ENCODE measurements at regions of chr4 and their contacts with region 1.

Region 1: DNA sequence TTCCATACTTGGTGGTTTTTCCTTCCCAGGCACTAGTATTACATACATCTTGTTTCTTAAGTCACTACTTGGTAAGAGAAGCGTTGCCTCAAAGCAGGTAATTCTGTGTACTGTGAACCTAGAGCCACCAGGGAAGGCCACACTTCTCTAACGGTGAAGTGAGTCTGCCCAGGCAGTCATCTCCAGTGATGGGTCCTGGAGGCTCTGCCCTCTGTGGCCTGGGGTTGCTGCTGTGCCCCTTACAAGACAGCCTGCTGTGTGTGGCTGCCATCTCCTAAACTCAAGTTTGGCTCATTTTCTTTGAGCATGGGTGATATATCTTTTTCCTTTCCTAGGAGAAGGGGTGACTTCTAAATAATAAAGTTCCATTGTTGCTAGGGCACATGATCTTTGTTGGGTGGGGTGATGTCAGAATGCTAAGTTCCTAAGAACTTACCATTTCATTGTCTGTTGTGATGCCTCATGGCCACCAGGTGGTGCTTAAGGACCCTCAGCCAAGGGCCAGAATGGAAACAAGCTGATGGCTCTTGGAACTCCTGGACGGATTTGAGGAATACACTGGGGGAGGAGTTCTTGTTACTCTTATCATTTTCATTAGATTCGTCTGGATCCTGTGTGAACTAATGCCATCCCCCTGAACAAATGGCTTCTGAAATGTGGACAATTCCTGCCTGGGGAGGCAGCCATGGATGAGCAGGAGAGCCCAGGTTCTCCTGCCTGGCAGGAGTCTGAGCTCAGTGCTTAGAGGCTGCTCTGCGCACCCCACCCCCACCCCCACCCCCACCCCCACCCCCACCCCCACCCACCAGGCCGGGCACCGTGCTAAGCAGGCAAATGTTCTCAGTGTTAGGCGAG is 41.1 kb upstream of the WDR1 start:
- DNase-seq: peak; percentile 81
- ATAC-seq: peak; percentile 89
- H3K4me3 ChIP-seq: no peak overlapping the region
- H3K27ac ChIP-seq: peak overlapping the region; percentile 60; the same call in 1 of the 2 replicates
- H3K4me1 ChIP-seq: peaks cover 2% of the 10 kb centered on the region
- H3K27me3 ChIP-seq: peaks cover 13% of the 10 kb centered on the region
- CTCF ChIP-seq: peak; percentile 87
- POLR2A ChIP-seq: no peak
- RAD21 ChIP-seq: peak; percentile 81

Region 2: GRCh38 chr4:10403633-10404445 is 246.1 kb after region 1 on chr4:
- CTCF ChIA-PET with region 1: interaction called, 7 read pairs
- POLR2A ChIA-PET with region 1: no interaction called
- dilution Hi-C with region 1: loop called (anchors 25 kb)
- in situ Hi-C with region 1: no loop called
- intact Hi-C with region 1: loop called (anchors 1 kb)
- DNase-seq: peak; percentile 30
- ATAC-seq: peak; percentile 77
- H3K4me3 ChIP-seq: no peak overlapping the region
- H3K27ac ChIP-seq: no peak overlapping the region
- H3K4me1 ChIP-seq: no peaks in the 10 kb centered on the region
- H3K27me3 ChIP-seq: no peaks in the 10 kb centered on the region
- CTCF ChIP-seq: peak; percentile 55
- POLR2A ChIP-seq: no peak
- RAD21 ChIP-seq: peak; percentile 61

Region 3: GRCh38 chr4:10535912-10536311 is 378.2 kb after region 1 on chr4:
- CTCF ChIA-PET with region 1: interaction called, 6 read pairs
- POLR2A ChIA-PET with region 1: no interaction called
- dilution Hi-C with region 1: no loop called
- in situ Hi-C with region 1: no loop called
- intact Hi-C with region 1: loop called (anchors 1 kb)
- DNase-seq: no peak
- ATAC-seq: no peak
- H3K4me3 ChIP-seq: no peak overlapping the region
- H3K27ac ChIP-seq: no peak overlapping the region
- H3K4me1 ChIP-seq: no peaks in the 10 kb centered on the region
- H3K27me3 ChIP-seq: peaks cover 5% of the 10 kb centered on the region; the same call in 1 of the 2 replicates
- CTCF ChIP-seq: no peak
- POLR2A ChIP-seq: no peak
- RAD21 ChIP-seq: no peak

Region 4: DNA sequence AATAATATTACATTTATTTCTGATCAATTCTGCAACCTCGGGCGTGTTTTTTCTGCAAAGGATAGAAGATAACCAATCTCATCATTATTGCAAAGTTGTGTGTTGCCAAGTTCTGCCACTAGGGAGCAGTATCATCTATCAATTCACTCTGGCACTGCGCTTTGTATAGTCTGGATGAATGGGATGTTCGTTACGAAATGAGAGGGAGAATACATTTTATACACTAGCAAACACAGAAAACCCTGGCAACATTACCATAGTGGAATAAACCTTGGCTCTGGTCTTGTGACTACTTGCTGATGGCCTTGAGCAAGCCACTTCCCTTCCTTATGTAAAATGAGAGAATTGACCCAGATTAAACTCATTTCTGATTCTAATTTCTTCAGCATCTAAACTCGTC is 397.0 kb after region 1 on chr4:
- CTCF ChIA-PET with region 1: no interaction called
- POLR2A ChIA-PET with region 1: no interaction called
- dilution Hi-C with region 1: no loop called
- in situ Hi-C with region 1: loop called (anchors 5 kb)
- intact Hi-C with region 1: loop called (anchors 1 kb)
- DNase-seq: peak; percentile 59
- ATAC-seq: peak; percentile 90
- H3K4me3 ChIP-seq: no peak overlapping the region
- H3K27ac ChIP-seq: no peak overlapping the region
- H3K4me1 ChIP-seq: no peaks in the 10 kb centered on the region
- H3K27me3 ChIP-seq: no peaks in the 10 kb centered on the region; the same call in 1 of the 2 replicates
- CTCF ChIP-seq: peak; percentile 84
- POLR2A ChIP-seq: no peak
- RAD21 ChIP-seq: peak; percentile 83